ENCODE measurements at regions of chr2 and their contacts with region 1.

Region 1: GRCh38 chr2:70301344-70302194 is at the start of gene FAM136A:
- DNase-seq: peak; percentile 91
- ATAC-seq: peak; percentile 93
- H3K4me3 ChIP-seq: peak within 1 kb of the TSS; percentile 61 to 98 (median 71)
- H3K4me3 Mint-ChIP-seq: peak within 1 kb of the TSS; percentile 94
- H3K27ac ChIP-seq: peak within 1 kb of the TSS; percentile 77 to 85
- H3K27ac Mint-ChIP-seq: peak within 1 kb of the TSS; percentile 95
- H3K4me1 ChIP-seq: peaks cover 7 to 14% of the 10 kb centered on the region in 2 donors
- H3K4me1 Mint-ChIP-seq: peaks cover 22% of the 10 kb centered on the region
- H3K27me3 ChIP-seq: no peaks in the 10 kb centered on the region
- H3K27me3 Mint-ChIP-seq: no peaks in the 10 kb centered on the region
- CTCF ChIP-seq: peak; percentile 81
- total RNA-seq, gene FAM136A: 41.6 and 41.7 TPM in 2 replicates

Region 2: DNA sequence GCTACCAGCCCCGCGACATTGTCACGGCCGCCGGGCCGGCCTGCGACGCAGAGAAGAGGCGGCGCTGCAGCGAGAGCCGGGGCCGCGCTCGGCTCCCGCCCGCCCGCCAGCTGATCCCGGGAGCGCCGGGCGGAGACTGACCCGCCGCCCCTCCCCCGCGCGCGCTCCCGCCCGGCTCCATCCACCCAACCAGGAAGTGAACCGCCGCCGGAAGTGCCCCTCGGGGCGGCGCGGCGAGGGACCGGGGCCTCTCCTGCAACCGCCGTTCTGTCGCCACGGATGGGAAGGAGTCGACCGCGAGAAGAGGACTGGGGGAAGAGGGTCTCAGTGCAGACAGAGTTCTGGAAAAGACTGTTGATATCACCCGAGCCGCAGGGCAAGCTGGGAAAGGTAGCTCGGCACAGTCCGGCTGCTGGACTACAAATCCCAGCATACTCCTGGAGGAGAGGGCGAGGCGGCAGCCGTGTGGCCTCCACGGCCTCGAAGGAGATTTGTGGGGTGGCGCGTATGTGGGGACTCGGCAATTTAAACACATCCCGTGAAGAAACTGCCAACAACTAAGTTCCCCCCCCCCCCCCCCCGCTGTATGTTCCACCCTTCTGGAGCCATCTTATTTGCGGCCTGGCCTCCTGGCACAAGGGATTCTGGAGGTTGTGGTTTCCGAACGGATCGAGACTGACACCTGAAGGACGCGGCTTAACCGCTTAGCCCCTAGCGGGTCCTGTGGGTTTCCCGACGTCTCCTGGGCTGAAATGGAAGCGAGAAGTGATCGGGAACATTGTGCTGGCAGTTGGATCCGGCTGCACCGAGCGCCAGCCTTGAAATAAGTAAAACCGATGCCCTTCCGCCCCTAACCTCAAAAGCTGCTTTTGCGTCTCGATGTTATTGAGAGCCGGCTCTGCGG is 657.7 kb before region 1 on chr2 and contains the start of gene AAK1:
- CTCF ChIA-PET with region 1: no interaction called
- POLR2A ChIA-PET with region 1: interaction called, 3 read pairs
- intact Hi-C with region 1: loop called (anchors 10 kb)
- DNase-seq: peak; percentile 89
- ATAC-seq: peak; percentile 69
- H3K4me3 ChIP-seq: peak within 1 kb of the TSS; percentile 63 to 99 (median 91)
- H3K4me3 Mint-ChIP-seq: peak within 1 kb of the TSS; percentile 95
- H3K27ac ChIP-seq: peak within 1 kb of the TSS in 1 of 2 donors; percentile 16
- H3K27ac Mint-ChIP-seq: peak within 1 kb of the TSS; percentile 94
- H3K4me1 ChIP-seq: peaks cover 42 to 51% of the 10 kb centered on the region in 2 donors
- H3K4me1 Mint-ChIP-seq: peaks cover 44% of the 10 kb centered on the region
- H3K27me3 ChIP-seq: peaks cover 4 to 74% (median 55%) of the 10 kb centered on the region in 4 experiments
- H3K27me3 Mint-ChIP-seq: peaks cover 73% of the 10 kb centered on the region
- CTCF ChIP-seq: no peak
- total RNA-seq, gene AAK1: 7.2 and 8.4 TPM in 2 replicates

Region 3: DNA sequence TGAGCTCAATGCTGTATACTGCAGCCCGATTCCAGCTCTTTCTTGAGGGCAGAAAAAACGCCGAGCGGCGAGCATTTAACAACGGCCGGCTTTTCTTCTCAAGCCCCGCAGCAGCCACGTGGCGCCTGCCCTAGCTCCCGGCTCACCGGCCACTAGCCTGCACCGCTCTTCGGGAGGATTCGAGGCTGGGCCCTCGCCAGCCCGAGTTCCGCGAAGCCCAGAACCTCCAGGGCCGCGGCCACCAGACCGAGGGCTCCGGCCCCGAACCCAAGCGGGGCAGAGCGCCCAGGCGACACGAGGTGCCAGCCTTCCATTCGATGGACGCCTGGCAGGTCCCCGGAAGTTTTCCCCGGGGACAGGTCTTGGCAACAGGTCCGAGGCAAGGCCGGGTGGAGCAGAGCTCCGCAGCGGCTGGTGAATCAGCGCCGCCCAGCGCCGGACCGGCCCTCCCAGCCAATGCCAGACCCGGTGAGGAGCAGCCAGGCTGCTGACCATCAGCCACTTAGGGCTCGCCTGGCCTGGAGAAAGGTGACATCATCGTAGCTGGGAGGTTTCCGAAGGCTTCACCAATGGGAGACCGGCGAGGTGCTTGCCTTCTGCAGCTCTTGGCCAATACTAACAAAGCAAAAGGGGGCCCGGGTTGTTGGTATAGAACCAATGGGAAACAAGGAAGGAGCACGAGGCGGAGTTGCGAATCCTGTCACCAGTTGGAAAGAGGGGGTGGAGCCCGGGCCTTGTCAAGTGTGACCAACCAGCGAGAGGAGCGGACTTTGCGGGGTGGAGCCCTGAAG is 387.2 kb before region 1 on chr2:
- CTCF ChIA-PET with region 1: interaction called, 131 read pairs
- POLR2A ChIA-PET with region 1: interaction called, 6 read pairs
- intact Hi-C with region 1: loop called (anchors 1 kb)
- DNase-seq: peak; percentile 100
- ATAC-seq: peak; percentile 89
- H3K4me3 ChIP-seq: peak overlapping the region; percentile 63 to 94 (median 80)
- H3K4me3 Mint-ChIP-seq: peak overlapping the region; percentile 82
- H3K27ac ChIP-seq: peak overlapping the region; percentile 93 to 97
- H3K27ac Mint-ChIP-seq: peak overlapping the region; percentile 79
- H3K4me1 ChIP-seq: peaks cover 18% of the 10 kb centered on the region in 2 donors
- H3K4me1 Mint-ChIP-seq: peaks cover 29% of the 10 kb centered on the region
- H3K27me3 ChIP-seq: no peaks in the 10 kb centered on the region
- H3K27me3 Mint-ChIP-seq: no peaks in the 10 kb centered on the region
- CTCF ChIP-seq: no peak

Region 4: GRCh38 chr2:70248181-70248847 is 53.3 kb before region 1 on chr2 and contains the start of gene TIA1:
- CTCF ChIA-PET with region 1: interaction called, 3 read pairs
- POLR2A ChIA-PET with region 1: no interaction called
- intact Hi-C with region 1: loop called (anchors 1 kb)
- DNase-seq: peak; percentile 99
- ATAC-seq: peak; percentile 96
- H3K4me3 ChIP-seq: peak within 1 kb of the TSS; percentile 70 to 98 (median 95)
- H3K4me3 Mint-ChIP-seq: peak within 1 kb of the TSS; percentile 98
- H3K27ac ChIP-seq: peak within 1 kb of the TSS; percentile 86 to 94
- H3K27ac Mint-ChIP-seq: peak within 1 kb of the TSS; percentile 98
- H3K4me1 ChIP-seq: peaks cover 24 to 29% of the 10 kb centered on the region in 2 donors
- H3K4me1 Mint-ChIP-seq: peaks cover 35% of the 10 kb centered on the region
- H3K27me3 ChIP-seq: no peaks in the 10 kb centered on the region
- H3K27me3 Mint-ChIP-seq: no peaks in the 10 kb centered on the region
- CTCF ChIP-seq: no peak
- total RNA-seq, gene TIA1: 214 and 243 TPM in 2 replicates

Region 5: GRCh38 chr2:70354264-70354949 is 52.8 kb after region 1 on chr2:
- CTCF ChIA-PET with region 1: no interaction called
- POLR2A ChIA-PET with region 1: no interaction called
- intact Hi-C with region 1: no loop called
- DNase-seq: no peak
- ATAC-seq: no peak
- H3K4me3 ChIP-seq: no peak overlapping the region
- H3K4me3 Mint-ChIP-seq: no peak overlapping the region
- H3K27ac ChIP-seq: no peak overlapping the region
- H3K27ac Mint-ChIP-seq: no peak overlapping the region
- H3K4me1 ChIP-seq: no peaks in the 10 kb centered on the region
- H3K4me1 Mint-ChIP-seq: no peaks in the 10 kb centered on the region
- H3K27me3 ChIP-seq: peaks cover 0 to 10% (median 7%) of the 10 kb centered on the region in 4 experiments
- H3K27me3 Mint-ChIP-seq: peaks cover 43% of the 10 kb centered on the region
- CTCF ChIP-seq: no peak

Region 6: DNA sequence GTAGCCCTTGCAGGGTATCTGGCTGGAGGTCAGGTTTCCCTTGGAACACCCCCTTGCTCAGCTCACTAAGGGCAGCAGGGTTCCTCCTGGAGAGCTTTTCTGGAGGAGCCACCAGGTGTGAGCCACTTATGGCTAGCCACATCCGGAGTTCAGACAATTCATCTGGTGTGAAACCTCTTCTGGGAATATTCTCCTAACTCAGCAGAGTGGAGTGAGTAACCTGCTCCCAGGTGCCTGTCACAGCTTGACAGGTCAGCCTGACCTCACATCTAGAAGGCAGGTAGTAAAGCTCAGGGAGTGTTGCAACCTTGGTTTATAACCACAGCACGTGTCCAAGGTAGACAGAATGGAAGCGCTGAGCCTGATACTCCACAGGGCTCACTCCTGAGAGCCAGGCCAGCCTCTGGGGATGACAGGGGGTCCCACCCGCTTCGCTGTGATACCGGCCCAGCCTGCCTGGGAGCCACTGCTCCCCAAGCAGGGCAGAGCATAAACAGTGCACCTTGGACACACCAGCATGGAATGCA is 314.7 kb after region 1 on chr2:
- CTCF ChIA-PET with region 1: interaction called, 148 read pairs
- POLR2A ChIA-PET with region 1: no interaction called
- intact Hi-C with region 1: no loop called
- DNase-seq: no peak
- ATAC-seq: no peak
- H3K4me3 ChIP-seq: no peak overlapping the region
- H3K4me3 Mint-ChIP-seq: no peak overlapping the region
- H3K27ac ChIP-seq: no peak overlapping the region
- H3K27ac Mint-ChIP-seq: no peak overlapping the region
- H3K4me1 ChIP-seq: no peaks in the 10 kb centered on the region
- H3K4me1 Mint-ChIP-seq: no peaks in the 10 kb centered on the region
- H3K27me3 ChIP-seq: peaks cover 0 to 4% (median 0%) of the 10 kb centered on the region in 4 experiments
- H3K27me3 Mint-ChIP-seq: peaks cover 33% of the 10 kb centered on the region
- CTCF ChIP-seq: no peak

Region 7: GRCh38 chr2:70710038-70710690 is 408.6 kb after region 1 on chr2:
- CTCF ChIA-PET with region 1: no interaction called
- POLR2A ChIA-PET with region 1: no interaction called
- intact Hi-C with region 1: no loop called
- DNase-seq: no peak
- ATAC-seq: no peak
- H3K4me3 ChIP-seq: no peak overlapping the region
- H3K4me3 Mint-ChIP-seq: no peak overlapping the region
- H3K27ac ChIP-seq: no peak overlapping the region
- H3K27ac Mint-ChIP-seq: no peak overlapping the region
- H3K4me1 ChIP-seq: no peaks in the 10 kb centered on the region
- H3K4me1 Mint-ChIP-seq: no peaks in the 10 kb centered on the region
- H3K27me3 ChIP-seq: no peaks in the 10 kb centered on the region
- H3K27me3 Mint-ChIP-seq: no peaks in the 10 kb centered on the region
- CTCF ChIP-seq: no peak

Region 8: GRCh38 chr2:70948337-70949003 is 646.9 kb after region 1 on chr2:
- CTCF ChIA-PET with region 1: interaction called, 38 read pairs
- POLR2A ChIA-PET with region 1: interaction called, 3 read pairs
- intact Hi-C with region 1: no loop called
- DNase-seq: peak; percentile 83
- ATAC-seq: peak; percentile 99
- H3K4me3 ChIP-seq: peak overlapping the region in 3 of 5 experiments; percentile 30 to 41 (median 39)
- H3K4me3 Mint-ChIP-seq: peak overlapping the region; percentile 86
- H3K27ac ChIP-seq: no peak overlapping the region
- H3K27ac Mint-ChIP-seq: no peak overlapping the region
- H3K4me1 ChIP-seq: peaks cover 13 to 14% of the 10 kb centered on the region in 2 donors
- H3K4me1 Mint-ChIP-seq: peaks cover 11% of the 10 kb centered on the region
- H3K27me3 ChIP-seq: peaks cover 0 to 20% (median 11%) of the 10 kb centered on the region in 4 experiments
- H3K27me3 Mint-ChIP-seq: peaks cover 25% of the 10 kb centered on the region
- CTCF ChIP-seq: peak; percentile 84